ENCODE measurements at regions of chr7 and their contacts with region 1.

Region 1: DNA sequence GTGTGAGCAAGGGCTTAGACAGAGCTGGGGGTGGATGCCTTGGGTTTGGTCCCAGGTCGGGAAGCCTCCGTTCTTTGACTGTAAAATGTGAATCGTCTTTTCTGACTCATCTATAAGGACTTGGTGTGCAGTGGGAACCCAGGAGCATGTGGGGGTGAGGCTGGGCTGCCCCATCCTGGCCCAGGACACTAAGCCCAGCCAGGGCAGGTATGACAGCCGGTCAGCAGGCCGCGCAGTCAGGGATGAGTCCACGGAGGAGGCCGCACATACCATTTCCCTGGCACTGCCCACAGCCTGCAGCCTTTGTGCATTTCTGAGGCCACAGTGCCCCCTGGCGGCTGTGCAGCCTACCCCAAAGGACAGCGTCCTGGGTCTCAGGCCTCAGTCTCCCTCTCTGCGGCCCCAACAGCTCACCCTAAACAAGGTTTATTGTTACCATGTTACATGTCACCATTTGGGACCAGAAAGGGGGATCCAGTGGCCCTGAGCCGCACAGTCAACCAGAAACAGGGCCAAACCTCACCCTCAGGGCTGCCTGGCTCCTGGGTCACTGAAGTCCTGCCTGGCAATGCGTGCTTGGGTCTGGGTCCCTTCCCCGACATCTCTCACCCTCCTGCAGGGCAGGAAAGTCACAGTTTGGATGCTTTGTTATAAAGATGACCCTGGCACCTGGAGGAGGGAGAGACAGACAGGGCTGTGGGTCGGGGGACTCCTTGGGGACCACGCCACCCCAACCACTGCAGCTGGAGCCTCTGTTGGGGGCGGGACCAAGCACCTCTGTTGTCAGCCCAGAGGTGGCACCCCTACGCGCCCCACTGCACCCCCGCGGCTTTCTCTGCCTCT is 14.4 kb upstream of the SH2B2 start:
- DNase-seq: peak; percentile 95
- H3K4me3 ChIP-seq: no peak overlapping the region; a peak in 1 of 4 replicates
- H3K27ac ChIP-seq: no peak overlapping the region
- H3K4me1 ChIP-seq: peaks cover 0 to 22% of the 10 kb centered on the region in 2 experiments; a peak in 1 of 4 replicates
- H3K27me3 ChIP-seq: no peaks in the 10 kb centered on the region
- CTCF ChIP-seq: peak; percentile 100
- EP300 ChIP-seq: no peak
- RAD21 ChIP-seq: peak; percentile 99

Region 2: GRCh38 chr7:101681170-101682007 is 590.9 kb before region 1 on chr7:
- CTCF ChIA-PET with region 1: interaction called, 13 read pairs
- POLR2A ChIA-PET with region 1: no interaction called
- DNase-seq: peak; percentile 94
- H3K4me3 ChIP-seq: peak overlapping the region in 1 of 2 experiments; percentile 35; a peak in 1 of 4 replicates
- H3K27ac ChIP-seq: peak overlapping the region; percentile 34 to 88
- H3K4me1 ChIP-seq: peaks cover 15% of the 10 kb centered on the region in 2 experiments; a peak in 3 of 4 replicates
- H3K27me3 ChIP-seq: no peaks in the 10 kb centered on the region
- CTCF ChIP-seq: no peak
- EP300 ChIP-seq: peak; percentile 53 to 62; a peak in 3 of 4 replicates
- RAD21 ChIP-seq: peak; percentile 32; the same call in 1 of the 2 replicates

Region 3: DNA sequence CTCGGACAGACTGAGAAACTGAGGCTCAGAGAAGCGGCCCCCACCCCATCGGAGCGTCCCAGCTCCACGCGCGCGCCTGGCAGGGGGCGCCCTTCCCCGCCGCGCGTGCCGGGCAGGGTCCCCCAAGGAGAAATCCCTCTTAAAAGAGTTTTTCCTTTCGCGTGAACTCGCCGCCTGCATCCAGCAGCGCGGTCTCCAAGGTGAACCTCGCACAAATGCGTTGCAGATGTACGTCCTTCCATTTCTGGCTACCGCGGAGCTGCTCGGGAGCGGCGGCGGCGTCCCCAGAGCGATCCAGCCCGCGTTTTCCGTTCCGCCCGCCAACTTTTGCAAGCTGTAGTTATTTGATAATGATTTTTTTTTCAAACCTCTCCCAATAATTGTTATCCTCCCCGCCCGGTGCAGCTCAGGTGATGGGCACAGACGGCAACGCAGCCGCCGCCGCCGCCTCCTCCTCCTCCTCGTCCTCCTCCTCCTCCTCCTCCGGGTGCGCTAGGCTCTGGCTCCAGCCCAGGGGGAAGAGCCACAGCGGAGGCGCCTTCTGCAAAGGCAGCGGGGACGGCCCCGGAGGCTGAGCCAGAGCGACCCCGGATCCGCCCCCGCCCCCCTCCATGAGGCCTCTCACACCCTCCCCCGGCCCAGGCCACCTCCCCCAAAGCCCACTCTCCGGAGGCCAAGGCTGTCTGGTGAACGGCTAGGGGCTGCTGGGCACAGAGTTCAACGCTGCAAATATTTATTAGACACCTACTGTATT is 528.9 kb before region 1 on chr7:
- CTCF ChIA-PET with region 1: interaction called, 12 read pairs
- POLR2A ChIA-PET with region 1: no interaction called
- DNase-seq: peak; percentile 94
- H3K4me3 ChIP-seq: peak overlapping the region; percentile 54 to 90
- H3K27ac ChIP-seq: no peak overlapping the region
- H3K4me1 ChIP-seq: no peaks in the 10 kb centered on the region; a peak in 1 of 4 replicates
- H3K27me3 ChIP-seq: no peaks in the 10 kb centered on the region; the same call in 1 of the 2 replicates
- CTCF ChIP-seq: peak; percentile 86
- EP300 ChIP-seq: no peak; a peak in 2 of 4 replicates
- RAD21 ChIP-seq: peak; percentile 37

Region 4: DNA sequence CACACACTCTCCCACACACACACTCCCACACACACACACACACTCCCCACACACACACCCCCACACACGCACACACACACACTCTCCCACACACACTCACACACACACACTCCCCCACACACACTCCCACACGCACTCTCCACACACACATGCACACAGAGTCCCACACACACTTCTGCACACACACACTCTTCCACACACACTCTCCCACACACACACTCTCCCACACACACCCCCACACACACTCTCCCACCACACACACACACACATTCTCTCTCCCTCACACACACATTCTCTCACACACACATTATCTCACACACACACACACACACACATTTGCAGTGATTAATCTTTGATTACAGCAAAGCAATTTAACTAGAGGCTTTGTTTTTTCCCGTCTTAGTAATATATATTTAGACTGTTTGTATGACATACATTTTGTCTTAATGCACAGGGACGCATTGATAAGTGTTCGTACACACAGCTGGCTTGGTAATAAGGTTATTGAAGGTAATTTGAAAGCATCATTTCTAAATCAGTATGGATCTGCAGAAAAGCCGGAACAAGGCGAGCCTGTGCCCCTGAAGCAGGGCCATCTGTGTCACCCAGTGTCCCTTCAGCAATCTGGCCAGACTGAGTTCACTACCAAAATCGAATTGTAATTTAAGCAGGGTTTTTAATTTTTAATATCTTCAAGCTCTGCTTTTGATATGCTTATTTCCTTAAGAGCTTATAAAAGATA is 55.6 kb before region 1 on chr7:
- CTCF ChIA-PET with region 1: interaction called, 12 read pairs
- POLR2A ChIA-PET with region 1: no interaction called
- DNase-seq: peak; percentile 93
- H3K4me3 ChIP-seq: no peak overlapping the region
- H3K27ac ChIP-seq: peak overlapping the region in 1 of 2 experiments; percentile 88; a peak in 2 of 4 replicates
- H3K4me1 ChIP-seq: peaks cover 12 to 39% of the 10 kb centered on the region in 2 experiments
- H3K27me3 ChIP-seq: no peaks in the 10 kb centered on the region
- CTCF ChIP-seq: no peak
- EP300 ChIP-seq: peak in 1 of 2 experiments; percentile 96; a peak in 2 of 4 replicates
- RAD21 ChIP-seq: no peak

Region 5: GRCh38 chr7:102248456-102249395 is 23.6 kb before region 1 on chr7:
- CTCF ChIA-PET with region 1: interaction called, 85 read pairs
- POLR2A ChIA-PET with region 1: interaction called, 8 read pairs
- DNase-seq: peak; percentile 49
- H3K4me3 ChIP-seq: no peak overlapping the region
- H3K27ac ChIP-seq: no peak overlapping the region
- H3K4me1 ChIP-seq: peaks cover 0 to 34% of the 10 kb centered on the region in 2 experiments; a peak in 2 of 4 replicates
- H3K27me3 ChIP-seq: no peaks in the 10 kb centered on the region
- CTCF ChIP-seq: 0 out of 2 replicates have a peak, but pooled peaks have one; percentile 17
- EP300 ChIP-seq: no peak
- RAD21 ChIP-seq: no peak

Region 6: GRCh38 chr7:102286237-102287110 is 14.2 kb after region 1 on chr7 and contains the start of gene SH2B2:
- CTCF ChIA-PET with region 1: interaction called, 59 read pairs
- POLR2A ChIA-PET with region 1: no interaction called
- DNase-seq: peak; percentile 99
- H3K4me3 ChIP-seq: peak within 1 kb of the TSS; percentile 89 to 96
- H3K27ac ChIP-seq: peak within 1 kb of the TSS; percentile 45 to 97
- H3K4me1 ChIP-seq: peaks cover 0 to 34% of the 10 kb centered on the region in 2 experiments; a peak in 1 of 4 replicates
- H3K27me3 ChIP-seq: no peaks in the 10 kb centered on the region
- CTCF ChIP-seq: peak; percentile 13; the same call in 1 of the 2 replicates
- EP300 ChIP-seq: peak in 1 of 2 experiments; percentile 56; a peak in 1 of 4 replicates
- RAD21 ChIP-seq: no peak
- polyA plus RNA-seq, gene SH2B2: 3.8 and 4.7 TPM in 2 replicates

Region 7: GRCh38 chr7:102306875-102307677 is 34.8 kb after region 1 on chr7:
- CTCF ChIA-PET with region 1: no interaction called
- POLR2A ChIA-PET with region 1: no interaction called
- DNase-seq: no peak
- H3K4me3 ChIP-seq: no peak overlapping the region
- H3K27ac ChIP-seq: no peak overlapping the region; a peak in 1 of 4 replicates
- H3K4me1 ChIP-seq: peaks cover 0 to 5% of the 10 kb centered on the region in 2 experiments; a peak in 1 of 4 replicates
- H3K27me3 ChIP-seq: no peaks in the 10 kb centered on the region
- CTCF ChIP-seq: no peak
- EP300 ChIP-seq: no peak
- RAD21 ChIP-seq: no peak

Region 8: GRCh38 chr7:102431617-102432298 is 159.5 kb after region 1 on chr7:
- CTCF ChIA-PET with region 1: no interaction called
- POLR2A ChIA-PET with region 1: no interaction called
- DNase-seq: no peak
- H3K4me3 ChIP-seq: no peak overlapping the region
- H3K27ac ChIP-seq: peak overlapping the region in 1 of 2 experiments; percentile 3; a peak in 2 of 4 replicates
- H3K4me1 ChIP-seq: peaks cover 8 to 11% of the 10 kb centered on the region in 2 experiments; a peak in 2 of 4 replicates
- H3K27me3 ChIP-seq: no peaks in the 10 kb centered on the region
- CTCF ChIP-seq: no peak
- EP300 ChIP-seq: no peak
- RAD21 ChIP-seq: no peak